Right cardiac atrium (tissue), 5 donors: ENCODE measurements at regions of chr1 and their contacts with region 1.

Region 1: GRCh38 chr1:2875707-2876561 is 74.4 kb upstream of the TTC34 start:
- DNase-seq: peak in 2 of 3 donors; percentile 74 to 76
- ATAC-seq: peak; percentile 8 to 23
- H3K4me3 ChIP-seq: no peak overlapping the region
- H3K27ac ChIP-seq: no peak overlapping the region
- H3K4me1 ChIP-seq: no peaks in the 10 kb centered on the region
- H3K27me3 ChIP-seq: no peaks in the 10 kb centered on the region

Region 2: DNA sequence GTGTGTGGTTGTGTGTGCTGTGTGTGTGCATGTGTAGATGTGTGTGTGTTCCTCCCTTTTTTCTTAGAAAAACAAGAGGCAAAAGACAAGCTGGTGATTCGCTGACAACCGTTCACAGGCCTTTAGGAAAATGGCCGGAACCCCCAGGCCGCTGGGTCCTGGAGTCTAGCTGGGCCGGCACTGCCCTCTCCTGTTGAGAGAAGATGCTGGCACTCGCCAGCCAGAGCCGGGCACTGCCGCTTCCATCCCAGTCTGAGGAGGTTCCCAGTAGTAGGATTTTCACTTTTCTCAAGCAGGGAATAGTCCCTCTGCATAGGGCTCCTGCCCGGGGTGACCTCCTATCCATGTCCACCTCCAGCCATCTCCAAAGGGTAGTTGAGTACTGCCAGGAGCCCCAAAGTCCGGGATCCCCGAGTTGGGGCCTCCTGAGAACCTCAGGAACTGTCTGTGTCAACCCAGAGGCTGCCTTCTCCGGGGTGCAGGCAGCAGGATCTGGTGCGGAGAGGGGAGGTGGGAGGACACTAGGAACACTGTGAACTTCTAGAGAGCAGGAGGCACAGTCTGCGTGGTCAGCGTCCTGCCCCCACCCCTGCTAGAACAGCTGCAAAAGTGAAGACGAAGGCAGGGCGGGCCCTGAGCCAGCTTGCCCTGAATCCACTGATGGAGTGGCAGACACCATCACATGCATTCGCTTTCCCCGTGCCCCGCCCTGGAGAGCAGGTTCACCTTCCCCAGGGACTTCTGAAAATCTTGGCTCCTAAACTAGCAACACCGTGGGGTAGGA is 534.4 kb after region 1 on chr1:
- intact Hi-C with region 1: loop called in 2 of 4 experiments (anchors 10 kb)
- DNase-seq: peak; percentile 67 to 91 (median 87)
- ATAC-seq: peak; percentile 74 to 83
- H3K4me3 ChIP-seq: no peak overlapping the region
- H3K27ac ChIP-seq: no peak overlapping the region
- H3K4me1 ChIP-seq: no peaks in the 10 kb centered on the region
- H3K27me3 ChIP-seq: no peaks in the 10 kb centered on the region

Region 3: DNA sequence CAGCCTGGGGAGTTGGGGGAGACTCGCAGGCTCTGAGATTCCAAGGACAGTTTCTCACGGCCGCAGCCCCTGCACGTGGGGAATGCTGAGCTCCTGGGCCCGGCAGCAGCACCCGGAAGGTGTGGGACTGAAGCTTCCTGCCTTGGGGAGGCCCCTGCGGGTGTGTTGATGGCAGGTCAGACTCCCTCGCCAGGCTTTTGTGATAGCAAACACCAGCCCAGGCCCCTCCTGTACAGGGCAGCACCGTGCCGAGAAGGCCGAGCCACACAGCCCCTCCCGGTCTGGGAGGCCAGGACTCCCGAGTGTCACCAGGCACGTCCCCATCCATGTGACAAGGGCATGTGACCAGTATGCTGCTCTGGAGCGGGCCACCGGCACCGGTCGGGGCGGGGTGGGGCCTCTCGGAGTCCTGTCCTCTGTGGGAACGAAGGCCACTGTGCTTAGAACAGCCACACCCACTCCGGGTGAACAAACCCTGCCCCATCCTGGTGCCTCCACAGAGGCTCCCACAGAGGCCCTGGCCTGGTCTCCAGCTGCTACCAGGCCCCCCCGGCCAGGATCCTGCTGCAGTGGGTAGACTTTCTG is 547.4 kb after region 1 on chr1:
- intact Hi-C with region 1: loop called in 2 of 4 experiments (anchors 5 to 10 kb)
- DNase-seq: peak; percentile 76 to 88 (median 87)
- ATAC-seq: peak; percentile 84 to 85
- H3K4me3 ChIP-seq: no peak overlapping the region
- H3K27ac ChIP-seq: peak overlapping the region; percentile 8
- H3K4me1 ChIP-seq: no peaks in the 10 kb centered on the region
- H3K27me3 ChIP-seq: no peaks in the 10 kb centered on the region